MCF 10A (cell line): ENCODE measurements at regions of chr20 and their contacts with region 1.

Region 1: DNA sequence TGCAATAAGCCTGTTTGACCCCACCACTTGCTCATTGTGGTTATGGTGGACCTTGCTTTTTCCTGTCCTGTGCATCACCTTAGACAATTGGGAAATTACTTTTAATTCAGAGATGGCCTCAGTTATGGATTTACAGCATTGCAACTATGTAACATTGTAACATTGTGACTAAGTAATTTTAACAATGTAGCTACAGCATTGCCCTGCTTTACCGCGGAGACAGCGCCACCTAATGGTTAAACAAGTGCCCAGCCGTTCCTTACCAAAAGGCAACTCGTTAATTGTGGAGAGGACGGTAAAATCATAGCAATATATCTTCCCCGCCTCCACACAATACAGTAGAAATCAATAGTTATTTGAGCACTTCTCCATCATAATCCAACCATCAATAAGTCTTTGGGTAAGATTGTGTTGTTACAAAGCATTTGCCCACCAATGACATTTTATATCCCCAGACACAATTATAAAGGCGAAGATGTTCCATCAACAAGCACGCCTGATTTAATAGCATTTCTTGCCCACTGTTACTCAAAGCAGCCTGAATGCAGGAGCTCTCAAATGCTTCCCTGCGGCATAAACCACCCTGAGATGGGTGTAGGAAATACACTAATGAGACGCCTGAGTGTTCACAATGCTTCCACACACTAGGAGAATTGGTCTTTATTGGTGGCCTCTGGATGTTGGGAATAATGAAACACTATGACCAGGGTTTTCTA is 93.7 kb downstream of the PROKR2 start:
- DNase-seq: peak; percentile 66
- H3K4me3 Mint-ChIP-seq: no peak overlapping the region
- H3K27ac Mint-ChIP-seq: no peak overlapping the region
- H3K4me1 Mint-ChIP-seq: no peaks in the 10 kb centered on the region
- H3K27me3 Mint-ChIP-seq: peaks cover 51% of the 10 kb centered on the region
- CTCF ChIP-seq: peak; percentile 81

Region 2: DNA sequence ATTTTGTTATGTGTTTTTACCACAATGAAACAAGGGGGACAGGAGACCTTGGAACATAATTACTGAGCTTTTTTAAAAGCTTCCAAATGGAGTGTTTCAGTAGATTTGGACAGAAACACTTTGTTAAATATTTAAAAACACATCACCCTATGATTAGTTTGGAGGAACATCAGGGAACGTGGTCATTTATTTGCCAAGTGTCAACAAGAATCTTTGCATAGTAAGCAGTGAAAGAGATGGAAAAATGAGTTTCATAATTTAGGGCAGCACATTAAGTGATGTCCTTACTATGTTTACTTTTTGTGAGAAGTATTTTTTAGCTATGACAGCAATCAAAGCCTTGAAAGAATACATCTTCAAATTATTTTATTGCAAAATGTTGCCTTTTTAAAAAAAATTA is 11.1 kb after region 1 on chr20:
- CTCF ChIA-PET with region 1: interaction called, 10 read pairs
- POLR2A ChIA-PET with region 1: no interaction called
- intact Hi-C with region 1: no loop called
- DNase-seq: no peak
- H3K4me3 Mint-ChIP-seq: no peak overlapping the region
- H3K27ac Mint-ChIP-seq: no peak overlapping the region
- H3K4me1 Mint-ChIP-seq: no peaks in the 10 kb centered on the region
- H3K27me3 Mint-ChIP-seq: peaks cover 92% of the 10 kb centered on the region
- CTCF ChIP-seq: no peak

Region 3: GRCh38 chr20:5369629-5370542 is 146.8 kb after region 1 on chr20:
- CTCF ChIA-PET with region 1: no interaction called
- POLR2A ChIA-PET with region 1: no interaction called
- intact Hi-C with region 1: no loop called
- DNase-seq: no peak
- H3K4me3 Mint-ChIP-seq: no peak overlapping the region
- H3K27ac Mint-ChIP-seq: no peak overlapping the region
- H3K4me1 Mint-ChIP-seq: no peaks in the 10 kb centered on the region
- H3K27me3 Mint-ChIP-seq: peaks cover 59% of the 10 kb centered on the region
- CTCF ChIP-seq: no peak

Region 4: DNA sequence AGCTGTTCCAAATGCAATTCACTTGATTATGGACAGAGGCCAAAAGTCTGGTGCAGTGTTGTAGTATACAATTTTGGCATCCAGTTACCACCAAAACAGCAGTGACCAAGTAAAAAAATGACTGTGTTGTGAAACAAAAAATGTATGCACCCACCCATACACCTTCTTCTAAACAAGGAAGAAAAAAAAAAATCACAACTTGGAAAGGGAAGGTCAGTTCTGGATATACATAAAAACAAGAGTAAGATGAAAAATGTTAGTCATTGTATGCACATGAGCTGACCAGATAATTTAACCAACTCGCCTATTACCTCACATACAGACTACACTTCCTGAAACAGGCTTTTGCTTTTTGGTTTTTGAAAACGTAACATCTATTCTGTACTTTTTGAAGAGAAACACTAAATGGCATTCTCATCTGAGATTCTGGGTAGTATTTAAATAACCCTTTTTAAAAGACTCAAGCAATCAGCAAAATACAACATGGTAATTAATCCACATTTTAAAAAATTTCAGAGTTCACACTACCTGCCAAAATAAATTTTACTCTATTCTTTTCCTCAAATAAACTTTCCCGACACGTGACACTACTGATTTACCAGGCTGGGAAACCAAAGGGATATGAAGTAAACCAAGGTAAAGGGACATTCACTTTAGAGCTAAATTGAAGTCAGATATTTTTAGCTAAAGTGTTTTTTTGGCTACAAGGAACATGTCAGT is 385.5 kb after region 1 on chr20:
- CTCF ChIA-PET with region 1: no interaction called
- POLR2A ChIA-PET with region 1: no interaction called
- intact Hi-C with region 1: no loop called
- DNase-seq: peak; percentile 61
- H3K4me3 Mint-ChIP-seq: peak overlapping the region; percentile 91
- H3K27ac Mint-ChIP-seq: peak overlapping the region; percentile 94
- H3K4me1 Mint-ChIP-seq: peaks cover 35% of the 10 kb centered on the region
- H3K27me3 Mint-ChIP-seq: no peaks in the 10 kb centered on the region
- CTCF ChIP-seq: no peak